ENCODE measurements at regions of chr6 and their contacts with region 1.

Region 1: DNA sequence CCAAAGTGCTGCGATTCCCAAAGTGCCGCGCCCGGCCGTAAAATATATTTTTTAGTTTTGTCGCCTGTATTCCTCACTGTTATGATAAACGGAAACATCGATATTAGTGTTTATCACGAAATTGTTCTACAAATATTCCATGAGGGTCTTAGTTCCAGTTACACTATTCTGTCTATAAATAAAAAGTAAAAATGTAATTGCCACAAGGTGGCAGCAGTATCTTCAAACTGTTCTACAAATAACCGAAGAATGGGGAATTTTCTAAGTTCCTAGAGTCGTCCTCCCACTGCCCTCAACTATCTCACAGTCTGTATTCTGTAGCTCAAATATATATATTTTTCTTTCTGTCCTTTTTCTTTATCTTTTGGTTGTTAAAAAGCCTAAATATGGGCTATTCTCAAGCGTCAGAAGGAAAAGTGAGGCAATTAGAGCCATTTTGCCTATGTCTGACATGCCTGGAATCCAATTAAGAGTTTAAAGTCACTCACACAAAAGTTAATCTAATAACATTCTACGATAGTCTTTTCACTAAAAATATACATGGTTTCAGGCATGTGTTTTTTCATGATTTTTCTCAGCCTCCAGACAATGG is 14.2 kb upstream of the FAM162B start:
- DNase-seq: no peak
- H3K4me3 ChIP-seq: no peak overlapping the region
- CTCF ChIP-seq: peak; percentile 7

Region 2: GRCh38 chr6:116764961-116765851 is 14.5 kb before region 1 on chr6 and contains the start of gene FAM162B:
- CTCF ChIA-PET with region 1: interaction called, 30 read pairs
- POLR2A ChIA-PET with region 1: no interaction called
- DNase-seq: no peak
- H3K4me3 ChIP-seq: peak within 1 kb of the TSS; percentile 50
- CTCF ChIP-seq: no peak

Region 3: GRCh38 chr6:116847227-116847626 is 67.6 kb after region 1 on chr6:
- CTCF ChIA-PET with region 1: interaction called, 24 read pairs
- POLR2A ChIA-PET with region 1: no interaction called
- DNase-seq: no peak
- H3K4me3 ChIP-seq: no peak overlapping the region
- CTCF ChIP-seq: no peak

Region 4: GRCh38 chr6:116902629-116903028 is 123.0 kb after region 1 on chr6:
- CTCF ChIA-PET with region 1: no interaction called
- POLR2A ChIA-PET with region 1: no interaction called
- DNase-seq: no peak
- H3K4me3 ChIP-seq: no peak overlapping the region
- CTCF ChIP-seq: no peak

Measured in AG04449 (cell line).